ENCODE measurements at regions of chr15 and their contacts with region 1.

Region 1: GRCh38 chr15:60916679-60917460 is 312.2 kb downstream of the RORA start:
- DNase-seq: peak; percentile 83 to 89
- ATAC-seq: peak; percentile 85 to 92 (median 88)
- H3K4me3 ChIP-seq: peak overlapping the region in 4 of 10 donors; percentile 3 to 25 (median 16)
- H3K27ac ChIP-seq: peak overlapping the region; percentile 20 to 68 (median 50)
- H3K4me1 ChIP-seq: peaks cover 0 to 40% (median 26%) of the 10 kb centered on the region in 9 donors
- H3K27me3 ChIP-seq: no peaks in the 10 kb centered on the region
- CTCF ChIP-seq: peak; percentile 72 to 92 (median 86)

Region 2: DNA sequence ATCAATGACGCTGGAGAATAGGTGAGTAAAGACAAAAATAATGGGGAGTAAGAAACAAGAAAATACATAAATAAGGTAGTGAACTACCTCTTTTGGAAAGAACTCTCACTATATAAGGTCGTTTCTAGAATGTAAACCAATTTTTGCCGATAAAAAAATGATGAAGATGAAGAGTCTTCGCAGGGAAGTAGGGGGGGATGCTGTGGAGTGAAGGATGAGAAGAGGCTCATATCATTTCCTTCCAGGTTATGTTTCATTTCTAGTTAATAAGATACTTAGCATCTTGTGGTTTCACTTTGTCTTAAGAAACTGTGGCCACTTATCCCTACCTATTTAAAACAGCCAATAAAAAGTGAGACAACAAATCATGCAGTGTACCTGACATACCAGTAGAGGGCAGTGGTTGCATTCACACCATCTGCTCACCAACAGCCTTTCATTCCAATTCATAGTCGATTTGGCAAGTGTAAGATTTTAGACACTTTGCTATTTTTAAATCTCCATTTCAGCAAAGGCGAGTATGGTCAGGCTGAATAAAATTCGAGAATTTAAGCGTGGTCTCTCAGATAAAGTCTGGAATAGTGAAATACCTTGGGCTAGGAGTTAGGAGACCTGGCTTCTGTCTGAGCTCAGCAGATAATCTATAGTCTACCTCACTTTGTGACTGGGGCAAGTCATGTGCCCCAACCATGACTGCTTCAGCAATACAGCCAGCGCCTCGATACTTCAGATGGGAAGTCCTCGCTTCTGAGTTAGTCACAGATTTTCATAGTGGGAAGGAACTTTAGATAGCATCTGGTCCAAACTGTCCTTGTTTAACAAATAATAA is 409.1 kb before region 1 on chr15:
- intact Hi-C with region 1: loop called in 6 of 10 experiments (anchors 5 to 10 kb)
- DNase-seq: peak in 1 of 2 donors; percentile 50
- ATAC-seq: peak in 7 of 8 donors; percentile 55 to 83 (median 72)
- H3K4me3 ChIP-seq: no peak overlapping the region
- H3K27ac ChIP-seq: peak overlapping the region in 2 of 10 donors; percentile 12 to 28
- H3K4me1 ChIP-seq: peaks cover 10 to 46% (median 25%) of the 10 kb centered on the region in 9 donors
- H3K27me3 ChIP-seq: no peaks in the 10 kb centered on the region
- CTCF ChIP-seq: peak; percentile 85 to 97 (median 90)

Region 3: GRCh38 chr15:60592371-60593169 is 324.3 kb before region 1 on chr15:
- intact Hi-C with region 1: loop called in 5 of 10 experiments (anchors 2 to 5 kb)
- DNase-seq: peak; percentile 87 to 88
- ATAC-seq: peak; percentile 91 to 95 (median 94)
- H3K4me3 ChIP-seq: peak overlapping the region; percentile 69 to 98 (median 88)
- H3K27ac ChIP-seq: peak overlapping the region; percentile 84 to 96 (median 94)
- H3K4me1 ChIP-seq: peaks cover 0 to 29% (median 11%) of the 10 kb centered on the region in 9 donors
- H3K27me3 ChIP-seq: peaks cover 0 to 49% (median 0%) of the 10 kb centered on the region in 7 donors
- CTCF ChIP-seq: peak in 5 of 9 donors; percentile 11 to 36 (median 23)

Region 4: GRCh38 chr15:61034678-61035291 is 117.9 kb after region 1 on chr15:
- intact Hi-C with region 1: no loop called
- DNase-seq: no peak
- ATAC-seq: peak in 6 of 8 donors; percentile 37 to 76 (median 62)
- H3K4me3 ChIP-seq: peak overlapping the region in 5 of 10 donors; percentile 7 to 28 (median 14)
- H3K27ac ChIP-seq: peak overlapping the region in 9 of 10 donors; percentile 7 to 76 (median 61)
- H3K4me1 ChIP-seq: peaks cover 0 to 58% (median 45%) of the 10 kb centered on the region in 9 donors
- H3K27me3 ChIP-seq: no peaks in the 10 kb centered on the region
- CTCF ChIP-seq: no peak

Region 5: GRCh38 chr15:61051569-61052031 is 134.7 kb after region 1 on chr15:
- intact Hi-C with region 1: loop called in 7 of 10 experiments (anchors 2 to 10 kb)
- DNase-seq: peak; percentile 14 to 49
- ATAC-seq: peak; percentile 85 to 95 (median 90)
- H3K4me3 ChIP-seq: no peak overlapping the region
- H3K27ac ChIP-seq: no peak overlapping the region
- H3K4me1 ChIP-seq: peaks cover 0 to 15% (median 10%) of the 10 kb centered on the region in 9 donors
- H3K27me3 ChIP-seq: no peaks in the 10 kb centered on the region
- CTCF ChIP-seq: peak; percentile 43 to 78 (median 65)

Region 6: GRCh38 chr15:61834076-61834697 is 917.3 kb after region 1 on chr15:
- intact Hi-C with region 1: loop called in 1 of 10 experiments (anchors 10 kb)
- DNase-seq: peak; percentile 79 to 84
- ATAC-seq: peak; percentile 69 to 86 (median 76)
- H3K4me3 ChIP-seq: no peak overlapping the region
- H3K27ac ChIP-seq: no peak overlapping the region
- H3K4me1 ChIP-seq: peaks cover 0 to 12% (median 3%) of the 10 kb centered on the region in 9 donors
- H3K27me3 ChIP-seq: peaks cover 0 to 13% (median 0%) of the 10 kb centered on the region in 7 donors
- CTCF ChIP-seq: peak; percentile 94 to 99 (median 98)

Measured in heart right ventricle (tissue), 16 donors.